ENCODE measurements at regions of chr21 and their contacts with region 1.

Region 1: GRCh38 chr21:29477941-29478340 is 179.2 kb downstream of the BACH1 start:
- DNase-seq: no peak
- ATAC-seq: no peak
- H3K4me3 Mint-ChIP-seq: no peak overlapping the region
- H3K27ac Mint-ChIP-seq: no peak overlapping the region
- H3K4me1 Mint-ChIP-seq: peaks cover 16% of the 10 kb centered on the region
- H3K27me3 Mint-ChIP-seq: no peaks in the 10 kb centered on the region

Region 2: GRCh38 chr21:29449306-29449950 is 28.5 kb before region 1 on chr21:
- CTCF ChIA-PET with region 1: interaction called, 24 read pairs
- POLR2A ChIA-PET with region 1: no interaction called
- DNase-seq: peak; percentile 56
- ATAC-seq: peak; percentile 94
- H3K4me3 Mint-ChIP-seq: peak overlapping the region; percentile 63
- H3K27ac Mint-ChIP-seq: peak overlapping the region; percentile 97
- H3K4me1 Mint-ChIP-seq: peaks cover 21% of the 10 kb centered on the region
- H3K27me3 Mint-ChIP-seq: no peaks in the 10 kb centered on the region

Region 3: DNA sequence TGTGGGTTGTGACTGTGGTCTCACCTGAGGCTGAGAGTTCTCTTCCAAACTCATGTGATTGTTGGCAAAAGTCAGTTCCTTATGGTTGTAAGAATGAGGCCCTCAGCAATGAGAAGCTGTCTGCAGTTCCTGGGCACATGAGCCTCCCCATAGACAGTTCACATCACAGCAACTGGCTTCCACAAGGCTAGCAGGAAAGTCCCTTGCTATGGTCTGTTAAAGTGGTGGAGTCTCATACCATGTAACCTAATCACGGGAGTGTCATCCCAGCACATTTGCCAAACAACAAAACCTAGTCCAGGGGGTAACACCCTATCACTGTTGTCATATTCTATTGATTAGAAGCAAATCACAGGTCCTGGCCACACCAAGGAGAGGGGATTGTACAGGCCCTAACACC is 15.5 kb before region 1 on chr21:
- CTCF ChIA-PET with region 1: interaction called, 17 read pairs
- POLR2A ChIA-PET with region 1: no interaction called
- DNase-seq: no peak
- ATAC-seq: no peak
- H3K4me3 Mint-ChIP-seq: no peak overlapping the region
- H3K27ac Mint-ChIP-seq: no peak overlapping the region
- H3K4me1 Mint-ChIP-seq: no peaks in the 10 kb centered on the region
- H3K27me3 Mint-ChIP-seq: no peaks in the 10 kb centered on the region

Region 4: GRCh38 chr21:29849735-29850176 is 371.8 kb after region 1 on chr21:
- CTCF ChIA-PET with region 1: interaction called, 13 read pairs
- POLR2A ChIA-PET with region 1: no interaction called
- DNase-seq: peak; percentile 62
- ATAC-seq: peak; percentile 96
- H3K4me3 Mint-ChIP-seq: no peak overlapping the region
- H3K27ac Mint-ChIP-seq: no peak overlapping the region
- H3K4me1 Mint-ChIP-seq: no peaks in the 10 kb centered on the region
- H3K27me3 Mint-ChIP-seq: peaks cover 7% of the 10 kb centered on the region

Measured in activated CD8-positive, alpha-beta T cell treated with anti-CD3 and anti-CD28 coated beads, Interleukin-2, amount 10 ng/mL, durations not matched to agents 7 days and 5 days (primary cell).